ENCODE measurements at regions of chr3 and their contacts with region 1.

Region 1: GRCh38 chr3:141192345-141192744 is 39.3 kb upstream of the PXYLP1 start:
- DNase-seq: peak; percentile 84 to 95
- ATAC-seq: peak; percentile 98 to 99
- H3K4me3 ChIP-seq: no peak overlapping the region
- H3K27ac ChIP-seq: no peak overlapping the region
- H3K4me1 ChIP-seq: no peaks in the 10 kb centered on the region
- H3K27me3 ChIP-seq: no peaks in the 10 kb centered on the region
- CTCF ChIP-seq: peak; percentile 96 to 97 (median 96)
- POLR2A ChIP-seq: no peak

Region 2: DNA sequence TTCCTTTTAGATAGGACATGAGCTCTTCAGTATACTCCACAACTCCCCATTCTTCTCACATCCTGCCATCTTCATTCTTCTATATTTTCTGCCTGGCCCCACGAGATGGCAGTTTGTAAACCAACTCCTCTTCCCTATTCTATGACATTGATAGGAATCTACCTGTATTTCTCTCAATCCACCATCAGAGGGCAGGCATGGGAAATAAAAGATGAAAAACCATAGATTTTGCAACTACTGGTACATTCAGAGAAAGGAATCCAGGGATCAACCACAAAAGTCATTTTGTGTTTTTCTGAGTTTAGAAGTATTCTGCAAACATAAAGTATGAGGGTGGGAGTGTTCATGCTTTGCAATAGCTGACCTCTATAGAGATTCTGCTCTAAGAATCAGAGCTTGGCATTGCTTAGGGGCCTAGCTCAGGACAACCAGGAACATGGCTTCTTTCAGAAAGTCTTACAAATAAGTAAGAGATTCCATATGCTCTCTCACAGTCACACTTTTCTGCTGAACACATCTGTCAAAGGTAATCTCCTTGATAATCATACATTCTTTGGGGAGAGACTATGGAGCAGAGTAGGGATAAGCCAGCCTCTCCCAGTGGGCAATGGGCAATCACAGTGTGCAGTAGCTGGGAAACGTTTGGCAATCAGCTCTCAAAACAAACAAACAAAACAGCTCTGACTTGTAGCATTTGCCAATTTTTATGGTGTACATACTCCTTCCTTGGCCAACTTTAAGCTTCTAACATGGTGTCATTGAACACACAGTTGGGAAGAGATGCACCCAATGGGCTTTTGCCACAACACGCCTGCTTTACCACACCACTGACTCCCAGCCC is 293.8 kb before region 1 on chr3:
- in situ Hi-C with region 1: loop called in 3 of 4 experiments (anchors 5 to 25 kb)
- intact Hi-C with region 1: loop called (anchors 1 kb)
- DNase-seq: no peak
- ATAC-seq: peak; percentile 68 to 72
- H3K4me3 ChIP-seq: no peak overlapping the region
- H3K27ac ChIP-seq: no peak overlapping the region
- H3K4me1 ChIP-seq: peaks cover 7 to 11% of the 10 kb centered on the region in 2 donors
- H3K27me3 ChIP-seq: no peaks in the 10 kb centered on the region
- CTCF ChIP-seq: peak; percentile 24 to 53 (median 48)
- POLR2A ChIP-seq: no peak

Region 3: DNA sequence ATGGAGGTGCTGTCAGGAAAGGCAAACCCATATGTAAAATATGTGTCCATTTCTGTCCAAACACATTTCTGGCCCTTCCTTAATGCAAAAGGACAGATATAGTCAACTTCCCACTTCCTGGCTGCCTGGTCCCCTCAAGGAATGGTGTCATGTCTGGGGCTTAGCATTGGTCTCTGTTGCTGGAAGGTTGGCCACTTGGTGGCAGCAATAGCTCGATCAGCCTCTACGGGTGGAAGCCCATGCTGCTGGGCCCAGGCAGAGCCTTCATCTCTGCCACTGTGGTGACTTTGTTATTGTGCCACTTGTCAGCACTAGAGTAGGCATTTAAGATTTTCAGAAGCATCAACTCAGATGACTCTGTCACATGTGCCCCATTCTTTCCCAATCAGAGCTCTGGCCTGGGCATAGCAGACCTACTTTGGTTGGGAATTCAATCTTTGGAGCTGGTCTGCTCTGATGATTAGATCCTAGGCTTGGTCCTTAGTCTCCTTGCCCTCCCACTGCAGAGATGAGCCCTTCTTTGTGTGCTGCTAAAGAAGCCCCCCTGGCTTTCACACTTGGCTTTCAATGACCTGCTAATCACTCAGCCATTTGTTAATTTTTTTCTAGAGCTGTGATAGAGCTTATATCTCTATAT is 192.2 kb before region 1 on chr3:
- in situ Hi-C with region 1: loop called in 2 of 4 experiments (anchors 5 kb)
- intact Hi-C with region 1: loop called (anchors 1 kb)
- DNase-seq: peak; percentile 20 to 38
- ATAC-seq: peak; percentile 62 to 78
- H3K4me3 ChIP-seq: no peak overlapping the region
- H3K27ac ChIP-seq: no peak overlapping the region
- H3K4me1 ChIP-seq: no peaks in the 10 kb centered on the region
- H3K27me3 ChIP-seq: no peaks in the 10 kb centered on the region
- CTCF ChIP-seq: peak; percentile 44 to 75 (median 63)
- POLR2A ChIP-seq: no peak

Region 4: DNA sequence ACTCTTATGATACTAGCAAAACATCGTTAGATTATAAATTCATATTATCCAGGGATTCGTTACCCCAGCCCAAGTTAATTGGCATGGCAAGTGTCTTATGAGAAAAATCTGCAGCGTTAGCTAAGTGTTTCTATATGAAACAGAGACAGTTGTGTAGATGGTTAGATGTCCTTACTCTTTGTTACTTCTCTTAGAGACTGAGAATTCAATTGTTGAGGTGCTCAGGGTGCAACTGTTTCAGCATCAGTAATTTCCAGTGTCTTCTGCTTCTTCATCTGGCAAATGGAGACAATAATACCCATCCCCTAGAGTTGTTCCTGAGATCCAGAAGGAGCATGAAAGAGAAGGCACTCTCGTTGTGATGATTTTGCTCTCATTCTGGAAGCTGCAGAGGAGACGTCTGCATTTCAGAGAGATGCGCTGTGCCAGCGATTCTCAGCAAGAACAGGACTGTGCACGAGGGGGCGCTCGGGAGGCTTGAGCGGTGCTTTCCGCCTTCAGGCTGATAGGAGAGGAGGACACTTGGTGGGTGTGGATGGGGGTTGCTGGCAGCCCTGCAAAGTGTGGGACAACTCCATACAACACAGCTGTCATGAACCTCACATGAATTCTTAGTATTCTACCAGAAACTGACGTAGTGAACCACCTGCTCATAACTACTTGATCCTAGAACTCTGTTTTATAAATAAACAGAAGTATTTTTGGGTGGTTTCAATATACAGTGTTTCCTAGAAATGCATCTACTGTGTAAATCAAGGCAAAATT is 180.9 kb before region 1 on chr3:
- in situ Hi-C with region 1: loop called in 2 of 4 experiments (anchors 5 kb)
- intact Hi-C with region 1: loop called (anchors 2 kb)
- DNase-seq: peak; percentile 31 to 63
- ATAC-seq: peak; percentile 58 to 75
- H3K4me3 ChIP-seq: no peak overlapping the region
- H3K27ac ChIP-seq: no peak overlapping the region
- H3K4me1 ChIP-seq: peaks cover 0 to 2% of the 10 kb centered on the region in 2 donors
- H3K27me3 ChIP-seq: no peaks in the 10 kb centered on the region
- CTCF ChIP-seq: peak; percentile 55 to 84 (median 69)
- POLR2A ChIP-seq: no peak

Measured in gastrocnemius medialis (tissue), 4 donors.